CD8-positive, alpha-beta T cell (primary cell): ENCODE measurements at regions of chr3 and their contacts with region 1.

Region 1: DNA sequence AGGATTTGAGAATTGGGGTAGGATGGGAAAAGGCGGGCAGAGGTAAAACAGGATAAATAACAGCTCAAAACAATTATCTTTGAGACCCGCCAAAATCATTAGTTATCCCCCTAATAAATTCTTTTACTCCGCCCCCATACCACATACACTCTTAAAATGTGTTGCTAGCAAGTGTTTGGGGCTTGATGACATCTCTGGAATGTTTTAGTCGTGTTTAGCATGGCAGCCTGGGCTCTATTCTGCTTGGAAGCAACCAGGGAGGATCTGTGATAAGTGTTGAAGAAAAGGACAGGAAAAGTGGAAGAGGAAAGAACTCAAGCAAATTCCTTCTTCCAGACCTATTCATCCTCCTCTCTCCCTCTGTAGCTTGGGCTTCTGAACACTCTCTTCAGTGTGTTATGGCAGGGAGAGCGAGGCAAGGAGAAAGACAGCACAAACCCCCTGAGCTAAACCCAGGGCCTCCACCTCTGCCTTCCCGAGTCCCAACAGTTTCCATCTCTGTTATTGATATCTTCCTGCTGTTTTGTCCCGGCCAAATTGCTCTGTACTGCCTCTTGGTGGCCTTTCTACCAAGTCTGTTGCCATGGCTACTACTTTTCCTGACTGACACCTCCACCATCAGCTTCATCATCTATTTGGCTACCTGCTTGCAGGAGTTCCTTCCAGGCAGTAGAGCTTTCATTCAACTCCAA is 135.8 kb downstream of the RPL22L1 start:
- DNase-seq: no peak
- ATAC-seq: no peak
- H3K4me3 ChIP-seq: no peak overlapping the region
- H3K4me3 Mint-ChIP-seq: no peak overlapping the region
- H3K27ac ChIP-seq: no peak overlapping the region
- H3K27ac Mint-ChIP-seq: no peak overlapping the region
- H3K4me1 ChIP-seq: no peaks in the 10 kb centered on the region
- H3K4me1 Mint-ChIP-seq: no peaks in the 10 kb centered on the region
- H3K27me3 ChIP-seq: no peaks in the 10 kb centered on the region
- H3K27me3 Mint-ChIP-seq: peaks cover 27% of the 10 kb centered on the region
- CTCF ChIP-seq: no peak

Region 2: GRCh38 chr3:169939751-169940150 is 794.4 kb before region 1 on chr3:
- CTCF ChIA-PET with region 1: no interaction called
- POLR2A ChIA-PET with region 1: no interaction called
- intact Hi-C with region 1: loop called in 1 of 2 experiments (anchors 5 kb)
- DNase-seq: no peak
- ATAC-seq: no peak
- H3K4me3 ChIP-seq: no peak overlapping the region
- H3K4me3 Mint-ChIP-seq: no peak overlapping the region
- H3K27ac ChIP-seq: no peak overlapping the region
- H3K27ac Mint-ChIP-seq: no peak overlapping the region
- H3K4me1 ChIP-seq: no peaks in the 10 kb centered on the region
- H3K4me1 Mint-ChIP-seq: peaks cover 6% of the 10 kb centered on the region
- H3K27me3 ChIP-seq: no peaks in the 10 kb centered on the region
- H3K27me3 Mint-ChIP-seq: peaks cover 12% of the 10 kb centered on the region
- CTCF ChIP-seq: no peak